ENCODE measurements at regions of chr2 and their contacts with region 1.

Region 1: GRCh38 chr2:29309090-29310029 is 194.1 kb downstream of the CLIP4 start:
- DNase-seq: peak; percentile 71
- ATAC-seq: peak; percentile 89
- H3K4me3 Mint-ChIP-seq: no peak overlapping the region
- H3K27ac Mint-ChIP-seq: no peak overlapping the region
- H3K4me1 Mint-ChIP-seq: peaks cover 18% of the 10 kb centered on the region
- H3K27me3 Mint-ChIP-seq: peaks cover 36% of the 10 kb centered on the region

Region 2: GRCh38 chr2:29187926-29188325 is 121.4 kb before region 1 on chr2:
- CTCF ChIA-PET with region 1: no interaction called
- DNase-seq: no peak
- ATAC-seq: no peak
- H3K4me3 Mint-ChIP-seq: no peak overlapping the region
- H3K27ac Mint-ChIP-seq: no peak overlapping the region
- H3K4me1 Mint-ChIP-seq: peaks cover 10% of the 10 kb centered on the region
- H3K27me3 Mint-ChIP-seq: no peaks in the 10 kb centered on the region

Region 3: GRCh38 chr2:29293845-29294438 is 15.4 kb before region 1 on chr2:
- CTCF ChIA-PET with region 1: interaction called, 12 read pairs
- DNase-seq: peak; percentile 48
- ATAC-seq: peak; percentile 39
- H3K4me3 Mint-ChIP-seq: no peak overlapping the region
- H3K27ac Mint-ChIP-seq: no peak overlapping the region
- H3K4me1 Mint-ChIP-seq: no peaks in the 10 kb centered on the region
- H3K27me3 Mint-ChIP-seq: peaks cover 40% of the 10 kb centered on the region

Region 4: GRCh38 chr2:29323961-29324360 is 14.6 kb after region 1 on chr2:
- CTCF ChIA-PET with region 1: interaction called, 44 read pairs
- DNase-seq: no peak
- ATAC-seq: no peak
- H3K4me3 Mint-ChIP-seq: no peak overlapping the region
- H3K27ac Mint-ChIP-seq: no peak overlapping the region
- H3K4me1 Mint-ChIP-seq: peaks cover 57% of the 10 kb centered on the region
- H3K27me3 Mint-ChIP-seq: peaks cover 11% of the 10 kb centered on the region

Region 5: GRCh38 chr2:29329899-29330298 is 20.5 kb after region 1 on chr2:
- CTCF ChIA-PET with region 1: interaction called, 44 read pairs
- DNase-seq: no peak
- ATAC-seq: no peak
- H3K4me3 Mint-ChIP-seq: no peak overlapping the region
- H3K27ac Mint-ChIP-seq: no peak overlapping the region
- H3K4me1 Mint-ChIP-seq: peaks cover 15% of the 10 kb centered on the region
- H3K27me3 Mint-ChIP-seq: no peaks in the 10 kb centered on the region

Region 6: DNA sequence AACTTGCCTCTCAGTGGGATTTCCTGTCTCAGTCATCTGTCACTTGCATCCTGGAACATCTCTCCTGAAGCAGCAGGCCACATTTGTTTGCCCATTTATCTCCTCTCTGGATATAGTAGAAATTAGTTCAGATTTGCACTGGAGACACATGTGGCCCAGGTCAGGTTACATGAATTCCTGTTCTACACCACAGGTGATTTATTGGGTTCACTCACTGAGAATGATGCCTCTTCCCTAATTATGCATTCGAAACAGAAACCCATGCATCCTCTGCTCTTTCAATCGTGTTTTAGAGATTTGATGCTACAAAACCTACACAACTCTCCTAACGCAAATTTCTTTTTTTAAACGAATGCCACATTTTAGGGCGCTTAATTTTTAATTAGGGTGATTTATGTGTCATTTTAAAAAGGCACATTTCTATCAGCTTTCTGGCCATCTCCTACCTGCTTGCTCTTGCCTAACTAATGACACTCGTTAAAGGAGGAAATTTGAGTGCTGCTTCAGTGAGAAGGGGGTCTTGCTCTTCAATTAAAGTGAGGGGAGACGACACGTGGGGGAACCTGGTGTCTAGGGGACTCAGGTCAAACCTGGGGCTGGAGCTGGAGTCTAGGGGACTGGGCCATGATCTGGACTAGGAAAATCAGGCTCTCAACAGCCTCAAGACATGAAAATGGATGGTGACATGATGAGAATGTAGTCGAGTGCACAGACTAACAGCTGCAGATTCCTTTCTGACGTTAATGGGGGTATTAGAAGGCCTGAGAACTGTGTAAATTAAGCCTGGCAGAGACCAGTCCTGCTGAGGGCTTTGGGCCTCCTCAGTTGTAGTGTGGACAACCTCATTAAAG is 27.3 kb after region 1 on chr2:
- CTCF ChIA-PET with region 1: interaction called, 44 read pairs
- DNase-seq: no peak
- ATAC-seq: no peak
- H3K4me3 Mint-ChIP-seq: no peak overlapping the region
- H3K27ac Mint-ChIP-seq: no peak overlapping the region
- H3K4me1 Mint-ChIP-seq: peaks cover 2% of the 10 kb centered on the region
- H3K27me3 Mint-ChIP-seq: peaks cover 8% of the 10 kb centered on the region

Region 7: DNA sequence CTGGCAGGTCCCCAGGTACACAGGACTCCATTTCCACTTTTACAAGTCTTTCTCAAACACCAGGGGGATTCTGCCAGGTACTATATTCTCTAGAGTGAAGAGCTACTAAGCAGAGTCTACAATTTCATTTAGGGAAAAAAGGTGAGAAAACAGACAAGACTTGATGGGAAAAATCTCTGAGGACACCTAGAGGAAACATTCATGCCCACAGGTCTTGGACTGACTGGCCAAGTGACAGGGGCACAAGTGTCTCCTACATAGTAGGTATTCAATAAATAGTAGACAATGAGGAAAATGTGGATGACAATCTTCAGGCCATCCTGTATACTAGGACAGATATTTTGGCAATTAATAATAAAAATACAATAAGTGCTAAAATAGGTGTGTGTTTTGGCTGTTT is 34.5 kb after region 1 on chr2:
- CTCF ChIA-PET with region 1: interaction called, 20 read pairs
- DNase-seq: no peak
- ATAC-seq: no peak
- H3K4me3 Mint-ChIP-seq: no peak overlapping the region
- H3K27ac Mint-ChIP-seq: no peak overlapping the region
- H3K4me1 Mint-ChIP-seq: no peaks in the 10 kb centered on the region
- H3K27me3 Mint-ChIP-seq: peaks cover 43% of the 10 kb centered on the region

Region 8: GRCh38 chr2:29388071-29388470 is 78.7 kb after region 1 on chr2:
- CTCF ChIA-PET with region 1: interaction called, 12 read pairs
- DNase-seq: no peak
- ATAC-seq: no peak
- H3K4me3 Mint-ChIP-seq: no peak overlapping the region
- H3K27ac Mint-ChIP-seq: no peak overlapping the region
- H3K4me1 Mint-ChIP-seq: no peaks in the 10 kb centered on the region
- H3K27me3 Mint-ChIP-seq: peaks cover 30% of the 10 kb centered on the region